HCT116 (cell line): ENCODE measurements at regions of chr3 and their contacts with region 1.

Region 1: GRCh38 chr3:50192689-50193141 is 1.3 kb downstream of the GNAT1 start:
- DNase-seq: peak; percentile 43
- ATAC-seq: peak; percentile 50
- H3K4me3 ChIP-seq: no peak overlapping the region
- H3K27ac ChIP-seq: no peak overlapping the region
- H3K4me1 ChIP-seq: peaks cover 8 to 26% of the 10 kb centered on the region in 2 experiments; a peak in 3 of 4 replicates
- H3K27me3 ChIP-seq: no peaks in the 10 kb centered on the region
- CTCF ChIP-seq: peak; percentile 84 to 95 (median 91)
- POLR2A ChIP-seq: no peak
- RAD21 ChIP-seq: peak; percentile 93

Region 2: GRCh38 chr3:49703443-49703927 is 489.2 kb before region 1 on chr3:
- CTCF ChIA-PET with region 1: no interaction called
- POLR2A ChIA-PET with region 1: no interaction called
- RAD21 ChIA-PET with region 1: no interaction called
- intact Hi-C with region 1: loop called (anchors 1 kb)
- DNase-seq: peak; percentile 22
- ATAC-seq: peak; percentile 93
- H3K4me3 ChIP-seq: no peak overlapping the region
- H3K27ac ChIP-seq: peak overlapping the region; percentile 5; the same call in 1 of the 2 replicates
- H3K4me1 ChIP-seq: no peaks in the 10 kb centered on the region
- H3K27me3 ChIP-seq: no peaks in the 10 kb centered on the region
- CTCF ChIP-seq: peak; percentile 76 to 91 (median 76)
- POLR2A ChIP-seq: no peak
- RAD21 ChIP-seq: peak; percentile 90

Region 3: GRCh38 chr3:50203113-50203852 is 10.6 kb after region 1 on chr3:
- CTCF ChIA-PET with region 1: interaction called, 11 read pairs
- POLR2A ChIA-PET with region 1: interaction called, 3 read pairs
- RAD21 ChIA-PET with region 1: interaction called in 1 of 2 experiments, 7 read pairs
- intact Hi-C with region 1: no loop called
- DNase-seq: no peak
- ATAC-seq: no peak
- H3K4me3 ChIP-seq: no peak overlapping the region
- H3K27ac ChIP-seq: no peak overlapping the region
- H3K4me1 ChIP-seq: peaks cover 10 to 41% of the 10 kb centered on the region in 2 experiments; a peak in 3 of 4 replicates
- H3K27me3 ChIP-seq: no peaks in the 10 kb centered on the region
- CTCF ChIP-seq: no peak
- POLR2A ChIP-seq: no peak
- RAD21 ChIP-seq: no peak

Region 4: DNA sequence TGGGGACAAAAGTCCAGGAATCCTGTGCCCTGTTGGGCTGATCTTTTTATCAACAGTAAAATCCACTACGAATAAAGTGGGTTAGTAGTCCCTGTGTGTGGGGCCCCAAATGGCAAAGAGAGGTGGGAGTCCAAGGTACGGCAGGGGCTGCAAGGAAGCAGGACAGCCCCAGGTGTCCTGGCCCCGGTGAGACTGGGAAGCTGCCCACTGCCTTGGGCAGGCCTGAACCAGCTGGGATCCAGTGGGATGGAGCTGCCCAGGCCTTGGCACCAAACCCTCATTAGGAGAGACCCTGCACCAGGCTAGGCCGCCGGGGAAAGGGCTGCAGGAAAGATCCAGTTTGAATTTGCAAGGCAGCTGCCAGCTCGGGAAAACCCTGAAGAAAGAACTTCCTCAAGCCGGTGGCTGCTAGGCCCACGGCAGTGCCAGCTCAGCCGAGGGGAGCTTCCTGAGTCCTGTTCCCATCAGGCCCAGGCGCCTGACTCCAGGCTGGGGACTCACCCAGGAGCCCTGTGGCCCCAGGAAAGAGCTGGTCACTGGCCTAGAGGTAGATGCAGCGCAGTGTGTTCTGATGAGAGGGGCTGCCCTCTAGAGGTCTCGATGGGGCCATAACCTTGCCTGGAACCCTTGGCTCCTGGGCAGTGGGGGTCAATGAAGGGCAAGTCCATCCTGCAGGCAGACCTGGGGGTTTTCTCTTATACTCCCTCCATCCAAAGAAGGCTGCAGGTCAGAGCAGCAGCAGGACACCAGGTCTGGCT is 28.9 kb after region 1 on chr3:
- CTCF ChIA-PET with region 1: interaction called, 164 read pairs
- POLR2A ChIA-PET with region 1: interaction called, 12 read pairs
- RAD21 ChIA-PET with region 1: interaction called, 45 to 48 read pairs
- intact Hi-C with region 1: loop called (anchors 1 kb)
- DNase-seq: no peak
- ATAC-seq: no peak
- H3K4me3 ChIP-seq: no peak overlapping the region
- H3K27ac ChIP-seq: no peak overlapping the region
- H3K4me1 ChIP-seq: peaks cover 2 to 11% of the 10 kb centered on the region in 2 experiments; a peak in 2 of 4 replicates
- H3K27me3 ChIP-seq: no peaks in the 10 kb centered on the region
- CTCF ChIP-seq: no peak
- POLR2A ChIP-seq: no peak
- RAD21 ChIP-seq: no peak

Region 5: GRCh38 chr3:50245831-50246516 is 53.3 kb after region 1 on chr3:
- CTCF ChIA-PET with region 1: interaction called, 28 read pairs
- POLR2A ChIA-PET with region 1: interaction called, 6 read pairs
- RAD21 ChIA-PET with region 1: interaction called, 4 to 7 read pairs
- intact Hi-C with region 1: no loop called
- DNase-seq: no peak
- ATAC-seq: peak; percentile 87
- H3K4me3 ChIP-seq: peak overlapping the region; percentile 50 to 59
- H3K27ac ChIP-seq: peak overlapping the region; percentile 86
- H3K4me1 ChIP-seq: peaks cover 38 to 75% of the 10 kb centered on the region in 2 experiments
- H3K27me3 ChIP-seq: no peaks in the 10 kb centered on the region
- CTCF ChIP-seq: peak in 2 of 3 experiments; percentile 99; a peak in 4 of 6 replicates
- POLR2A ChIP-seq: no peak
- RAD21 ChIP-seq: no peak

Region 6: GRCh38 chr3:50272911-50273693 is 80.4 kb after region 1 on chr3:
- CTCF ChIA-PET with region 1: interaction called, 8 read pairs
- POLR2A ChIA-PET with region 1: interaction called, 3 read pairs
- RAD21 ChIA-PET with region 1: no interaction called
- intact Hi-C with region 1: loop called (anchors 1 kb)
- DNase-seq: no peak
- ATAC-seq: peak; percentile 62
- H3K4me3 ChIP-seq: peak overlapping the region; percentile 43 to 57
- H3K27ac ChIP-seq: peak overlapping the region; percentile 27; the same call in 1 of the 2 replicates
- H3K4me1 ChIP-seq: peaks cover 51 to 62% of the 10 kb centered on the region in 2 experiments
- H3K27me3 ChIP-seq: no peaks in the 10 kb centered on the region
- CTCF ChIP-seq: peak in 2 of 3 experiments; percentile 93 to 96; a peak in 4 of 6 replicates
- POLR2A ChIP-seq: no peak
- RAD21 ChIP-seq: no peak